Panc1 (cell line): ENCODE measurements at regions of chr11 and their contacts with region 1.

Region 1: DNA sequence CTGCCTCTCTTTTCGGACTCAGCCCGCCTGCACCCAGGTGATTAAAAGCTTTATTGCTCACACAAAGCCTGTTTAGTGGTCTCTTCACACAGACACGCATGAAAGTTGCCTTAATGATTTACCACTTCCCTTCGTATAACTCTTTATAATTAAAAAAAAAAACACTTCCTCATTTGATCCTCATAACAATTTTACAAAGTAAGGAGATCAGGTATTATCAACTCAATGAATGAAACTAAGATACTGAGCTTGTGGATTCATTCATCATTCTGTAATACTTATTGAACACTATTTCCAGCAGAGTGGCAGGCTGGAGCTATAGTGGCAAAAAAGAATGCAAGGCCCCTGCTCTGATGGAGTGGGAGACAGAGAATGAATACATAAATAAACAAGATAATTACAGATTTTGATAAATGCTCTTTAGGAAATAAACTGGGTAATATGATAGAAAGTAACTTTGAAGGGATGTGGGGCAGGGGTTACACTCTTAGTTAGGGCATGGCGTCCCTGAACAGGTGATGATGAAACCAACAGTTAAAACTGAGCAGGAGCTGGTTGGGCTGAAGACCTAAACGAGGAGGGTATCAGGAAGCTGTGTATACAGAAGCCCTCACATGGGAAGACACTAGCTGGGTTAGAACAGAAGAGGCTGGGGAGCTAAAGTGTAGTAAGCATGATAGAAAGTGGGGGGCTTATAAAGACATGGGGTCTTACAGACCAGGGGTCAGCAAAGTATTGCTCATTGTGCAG is 5.4 kb upstream of the CRTAM start:
- DNase-seq: no peak
- ATAC-seq: no peak
- H3K4me3 ChIP-seq: no peak overlapping the region
- H3K27ac ChIP-seq: no peak overlapping the region
- H3K4me1 ChIP-seq: no peaks in the 10 kb centered on the region
- H3K27me3 ChIP-seq: no peaks in the 10 kb centered on the region
- CTCF ChIP-seq: no peak

Region 2: GRCh38 chr11:122727101-122727929 is 105.6 kb before region 1 on chr11:
- CTCF ChIA-PET with region 1: no interaction called
- POLR2A ChIA-PET with region 1: interaction called, 14 read pairs
- in situ Hi-C with region 1: no loop called
- intact Hi-C with region 1: no loop called
- DNase-seq: no peak
- ATAC-seq: no peak
- H3K4me3 ChIP-seq: no peak overlapping the region
- H3K27ac ChIP-seq: no peak overlapping the region
- H3K4me1 ChIP-seq: peaks cover 4% of the 10 kb centered on the region; the same call in 1 of the 2 replicates
- H3K27me3 ChIP-seq: no peaks in the 10 kb centered on the region
- CTCF ChIP-seq: no peak